Adrenal gland (tissue), 19 donors: ENCODE measurements at regions of chr2 and their contacts with region 1.

Region 1: DNA sequence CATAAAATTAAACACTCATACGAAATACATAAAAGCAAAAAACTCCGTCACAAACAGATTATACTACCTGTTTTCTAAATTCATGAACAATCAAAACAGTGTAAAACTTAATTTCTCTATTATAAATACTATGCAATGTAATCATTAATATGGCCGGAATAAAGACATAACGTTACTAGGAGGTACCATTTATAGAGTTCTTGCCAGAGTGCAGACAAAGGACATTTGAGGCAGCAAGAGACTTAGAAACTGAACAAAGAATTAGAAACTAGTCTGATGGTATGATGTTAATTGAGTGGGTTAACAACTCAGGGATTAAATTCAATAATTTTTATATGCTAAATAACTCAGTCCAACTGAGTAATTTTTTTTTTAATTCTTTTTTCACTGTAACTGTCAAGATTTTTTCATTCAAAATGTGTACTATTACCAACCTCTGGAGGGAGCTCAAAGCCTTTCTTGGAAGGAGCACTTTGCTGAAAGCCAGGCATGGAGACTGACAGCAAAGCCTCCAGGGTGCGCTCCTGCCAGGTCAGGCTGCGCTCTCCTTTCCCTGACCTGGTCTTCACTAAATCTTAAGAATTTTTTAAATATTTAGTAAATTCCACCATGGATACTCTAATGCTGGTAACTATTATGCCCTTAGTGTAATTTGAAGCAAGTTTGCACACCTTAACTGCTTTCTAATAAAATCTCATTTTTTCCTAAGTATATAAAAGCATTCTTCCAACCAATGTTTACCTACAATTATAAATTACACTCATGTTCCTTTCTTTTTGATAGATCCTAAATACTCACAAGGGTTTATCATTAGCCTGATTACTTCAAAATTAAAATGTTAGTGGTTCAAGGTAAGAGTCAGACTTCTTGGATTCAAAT is 34.1 kb downstream of the WDR35 start:
- DNase-seq: peak; percentile 57 to 73 (median 62)
- H3K4me3 ChIP-seq: no peak overlapping the region
- H3K27ac ChIP-seq: no peak overlapping the region
- H3K4me1 ChIP-seq: no peaks in the 10 kb centered on the region
- H3K27me3 ChIP-seq: no peaks in the 10 kb centered on the region
- CTCF ChIP-seq: peak; percentile 63 to 87 (median 76)
- POLR2A ChIP-seq: no peak

Region 2: DNA sequence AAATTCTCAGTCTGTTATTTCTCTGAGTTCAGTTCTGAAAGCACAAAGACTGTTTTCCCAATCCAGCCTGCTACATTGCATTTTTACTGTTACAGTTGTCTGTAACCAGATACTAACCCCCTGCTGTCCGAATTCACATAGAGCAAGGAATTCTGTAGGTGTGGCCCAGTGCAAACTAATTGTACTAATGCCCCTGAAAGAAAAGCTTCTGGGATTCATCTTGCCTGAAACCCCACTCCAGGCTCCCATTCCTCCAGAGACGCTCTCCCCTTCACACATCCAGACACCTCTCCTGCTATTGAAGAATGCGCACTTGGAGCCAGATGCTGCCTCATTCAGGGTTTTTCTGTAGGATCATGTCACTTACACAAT is 181.0 kb before region 1 on chr2:
- intact Hi-C with region 1: no loop called
- DNase-seq: no peak
- H3K4me3 ChIP-seq: no peak overlapping the region
- H3K27ac ChIP-seq: no peak overlapping the region
- H3K4me1 ChIP-seq: no peaks in the 10 kb centered on the region
- H3K27me3 ChIP-seq: no peaks in the 10 kb centered on the region
- CTCF ChIP-seq: no peak
- POLR2A ChIP-seq: no peak

Region 3: GRCh38 chr2:20097879-20098714 is 142.3 kb after region 1 on chr2:
- intact Hi-C with region 1: loop called in 1 of 2 experiments (anchors 5 kb)
- DNase-seq: peak; percentile 75 to 94 (median 84)
- H3K4me3 ChIP-seq: no peak overlapping the region
- H3K27ac ChIP-seq: no peak overlapping the region
- H3K4me1 ChIP-seq: no peaks in the 10 kb centered on the region
- H3K27me3 ChIP-seq: no peaks in the 10 kb centered on the region
- CTCF ChIP-seq: peak; percentile 70 to 94 (median 92)
- POLR2A ChIP-seq: no peak

Region 4: DNA sequence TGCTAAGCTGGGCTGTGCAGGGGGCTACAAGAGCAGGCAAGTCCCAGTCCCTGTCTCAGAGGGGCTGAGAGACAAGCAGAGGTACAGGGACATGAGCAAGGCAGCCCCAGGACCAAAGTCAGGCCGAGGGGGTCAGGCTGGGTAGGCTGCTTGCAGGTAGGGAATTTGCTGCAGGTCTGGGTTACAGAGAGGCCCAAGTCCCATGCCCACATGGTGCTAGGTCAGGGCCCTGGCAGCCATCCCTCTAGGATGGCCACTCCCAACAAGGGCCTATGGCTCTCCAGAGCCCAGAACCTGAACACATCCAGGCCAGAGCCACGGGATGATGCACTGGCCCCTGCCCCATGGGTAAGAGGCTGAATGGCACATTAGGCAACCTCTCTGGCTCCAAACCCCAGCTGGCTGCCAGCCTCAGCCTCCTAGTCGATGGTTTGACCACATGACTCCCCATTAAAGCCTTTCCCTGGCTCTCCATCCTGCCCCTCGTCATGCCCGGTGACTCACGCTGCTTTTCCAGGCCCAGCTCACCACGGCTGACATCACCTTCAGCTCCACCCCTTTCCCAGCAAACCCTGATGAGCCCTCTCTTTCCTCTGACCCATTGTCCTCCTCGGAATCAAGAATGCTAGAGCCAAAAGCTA is 185.5 kb after region 1 on chr2:
- intact Hi-C with region 1: no loop called
- DNase-seq: peak; percentile 79 to 96 (median 95)
- H3K4me3 ChIP-seq: no peak overlapping the region
- H3K27ac ChIP-seq: peak overlapping the region in 2 of 5 donors; percentile 39 to 55
- H3K4me1 ChIP-seq: no peaks in the 10 kb centered on the region
- H3K27me3 ChIP-seq: no peaks in the 10 kb centered on the region
- CTCF ChIP-seq: no peak
- POLR2A ChIP-seq: peak in 1 of 2 donors; percentile 26

Region 5: DNA sequence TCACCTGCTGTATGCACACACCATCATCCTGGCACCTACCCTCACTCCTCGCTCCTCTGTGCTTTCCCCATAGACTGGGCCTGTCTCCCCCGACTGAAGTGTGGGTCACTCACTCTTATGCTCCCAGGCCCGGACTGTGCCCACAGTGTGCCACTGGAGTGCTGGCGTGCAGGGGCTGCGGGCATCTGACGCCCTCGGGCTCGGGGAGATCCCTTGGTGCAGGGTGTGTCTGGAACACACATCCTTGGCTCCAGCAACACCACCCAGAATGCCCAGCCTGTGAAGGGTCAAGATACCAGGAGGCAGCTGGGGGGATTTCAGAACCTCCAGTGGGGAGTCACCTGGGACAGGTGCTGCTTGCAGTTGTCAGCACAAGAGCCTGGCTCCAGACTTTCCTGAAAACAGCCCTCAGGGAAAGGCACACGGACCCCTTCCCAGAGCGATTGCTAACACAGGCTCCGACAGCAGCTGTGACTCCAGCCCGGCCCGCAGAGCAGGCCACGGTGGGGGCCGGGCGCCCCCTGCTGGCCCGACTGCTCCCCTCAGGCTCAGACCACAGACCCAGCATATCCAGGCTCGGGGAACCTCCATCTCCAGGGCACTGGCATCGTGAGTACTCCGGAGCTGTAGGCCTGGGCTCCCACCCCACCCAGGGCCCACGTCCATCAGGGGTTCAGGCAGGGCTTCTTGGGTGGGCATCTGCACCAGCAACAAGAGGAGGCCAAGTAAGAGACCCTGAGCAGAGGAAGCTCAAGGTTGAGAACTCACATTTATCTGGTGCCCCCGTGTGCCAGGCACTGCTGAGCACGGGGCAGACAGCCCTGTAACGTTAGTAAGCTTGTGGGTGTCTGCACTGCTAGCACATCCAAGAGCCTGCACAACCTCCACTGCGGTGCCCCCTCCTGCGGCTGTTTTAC is 686.5 kb after region 1 on chr2:
- intact Hi-C with region 1: no loop called
- DNase-seq: peak; percentile 81 to 94 (median 90)
- H3K4me3 ChIP-seq: no peak overlapping the region
- H3K27ac ChIP-seq: peak overlapping the region; percentile 84 to 97 (median 96)
- H3K4me1 ChIP-seq: peaks cover 15 to 28% of the 10 kb centered on the region in 2 donors
- H3K27me3 ChIP-seq: no peaks in the 10 kb centered on the region
- CTCF ChIP-seq: peak; percentile 94 to 99 (median 96)
- POLR2A ChIP-seq: no peak